Activated B cell treated with CpG ODN at 0.5 μM for 24 hours (primary cell): ENCODE measurements at regions of chr9 and their contacts with region 1.

Region 1: GRCh38 chr9:82184524-82184923 is 196.0 kb downstream of the SPATA31D1 start:
- DNase-seq: no peak
- ATAC-seq: peak; percentile 79
- H3K4me3 Mint-ChIP-seq: peak overlapping the region; percentile 3
- H3K27ac Mint-ChIP-seq: peak overlapping the region; percentile 74
- H3K4me1 Mint-ChIP-seq: peaks cover 37% of the 10 kb centered on the region
- H3K27me3 Mint-ChIP-seq: no peaks in the 10 kb centered on the region
- CTCF ChIP-seq: no peak

Region 2: DNA sequence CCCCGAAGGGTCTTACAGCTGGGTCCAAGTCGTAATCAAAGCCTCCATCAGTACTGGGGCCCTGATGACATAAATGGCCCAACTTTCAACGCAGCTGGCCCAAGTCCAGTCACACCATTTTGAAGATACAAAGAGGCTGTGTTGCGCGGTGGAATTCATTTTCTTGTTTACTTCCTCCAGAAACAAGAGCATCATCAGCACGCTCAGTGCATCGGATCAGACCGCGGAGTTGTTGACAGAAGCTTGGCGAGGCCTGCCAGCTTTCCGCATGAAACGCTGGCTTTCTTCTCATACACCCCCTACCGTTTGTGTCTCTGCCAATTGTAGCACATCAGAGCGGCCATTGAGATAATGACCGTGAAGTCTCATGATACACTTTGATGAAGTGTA is 358.0 kb before region 1 on chr9:
- CTCF ChIA-PET with region 1: no interaction called
- POLR2A ChIA-PET with region 1: no interaction called
- intact Hi-C with region 1: no loop called
- DNase-seq: no peak
- ATAC-seq: no peak
- H3K4me3 Mint-ChIP-seq: no peak overlapping the region
- H3K27ac Mint-ChIP-seq: no peak overlapping the region
- H3K4me1 Mint-ChIP-seq: peaks cover 23% of the 10 kb centered on the region
- H3K27me3 Mint-ChIP-seq: no peaks in the 10 kb centered on the region
- CTCF ChIP-seq: no peak

Region 3: GRCh38 chr9:82128011-82128696 is 56.4 kb before region 1 on chr9:
- CTCF ChIA-PET with region 1: interaction called, 6 read pairs
- POLR2A ChIA-PET with region 1: no interaction called
- intact Hi-C with region 1: loop called (anchors 1 kb)
- DNase-seq: no peak
- ATAC-seq: peak; percentile 90
- H3K4me3 Mint-ChIP-seq: peak overlapping the region; percentile 60
- H3K27ac Mint-ChIP-seq: peak overlapping the region; percentile 84
- H3K4me1 Mint-ChIP-seq: peaks cover 72% of the 10 kb centered on the region
- H3K27me3 Mint-ChIP-seq: no peaks in the 10 kb centered on the region
- CTCF ChIP-seq: no peak

Region 4: DNA sequence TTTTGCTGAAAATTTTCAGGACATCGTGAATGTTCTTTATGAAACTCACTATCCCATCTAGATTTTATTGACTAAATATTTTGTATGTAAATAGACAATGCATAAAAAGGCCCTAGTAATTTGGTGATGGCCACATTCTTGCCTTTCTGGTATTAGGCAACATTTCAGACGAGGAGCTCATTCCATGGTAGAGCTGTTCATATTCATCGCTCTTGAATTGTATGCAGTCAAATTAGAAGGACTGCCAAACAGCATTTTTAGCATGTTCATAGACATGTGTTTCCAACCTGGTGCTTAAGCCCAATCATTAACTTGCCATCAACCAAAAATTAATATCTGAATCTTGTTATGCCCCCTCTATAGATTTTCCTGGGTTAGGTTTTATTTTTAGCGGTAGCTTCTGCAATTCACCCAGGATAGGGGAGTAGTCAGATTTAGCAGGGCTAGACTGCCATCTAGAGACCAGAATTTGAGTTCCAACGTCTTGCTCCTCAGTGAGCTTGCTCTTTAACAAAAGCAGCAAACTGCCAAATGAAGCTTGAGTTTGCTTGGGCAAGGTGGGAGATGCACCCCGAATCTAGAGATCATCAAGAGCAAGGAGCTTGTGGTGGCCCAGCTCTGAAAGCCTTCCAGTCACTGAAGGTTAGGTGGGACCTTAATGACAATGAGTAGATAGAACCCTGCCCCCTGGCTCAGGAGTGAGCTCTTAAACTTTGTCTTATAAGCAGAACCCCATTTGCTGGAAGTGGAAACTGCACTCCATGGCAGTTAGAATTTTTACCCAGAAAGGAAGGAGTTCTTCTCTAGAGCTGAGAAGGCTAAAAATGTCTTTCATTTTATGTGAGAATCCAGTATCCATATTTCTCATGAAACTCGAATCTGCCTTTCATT is 422.2 kb after region 1 on chr9:
- CTCF ChIA-PET with region 1: interaction called, 10 read pairs
- POLR2A ChIA-PET with region 1: no interaction called
- intact Hi-C with region 1: loop called (anchors 2 kb)
- DNase-seq: no peak
- ATAC-seq: peak; percentile 45
- H3K4me3 Mint-ChIP-seq: no peak overlapping the region
- H3K27ac Mint-ChIP-seq: no peak overlapping the region
- H3K4me1 Mint-ChIP-seq: no peaks in the 10 kb centered on the region
- H3K27me3 Mint-ChIP-seq: no peaks in the 10 kb centered on the region
- CTCF ChIP-seq: peak; percentile 75